Ascending aorta (tissue), 2 donors: ENCODE measurements at regions of chr10 and their contacts with region 1.

Region 1: GRCh38 chr10:102743588-102744373 is at the start of gene WBP1L:
- DNase-seq: peak; percentile 95 to 99
- H3K4me3 ChIP-seq: peak within 1 kb of the TSS; percentile 85 to 98
- H3K27ac ChIP-seq: peak within 1 kb of the TSS; percentile 97 to 99
- H3K4me1 ChIP-seq: peaks cover 8 to 25% of the 10 kb centered on the region in 2 donors
- H3K27me3 ChIP-seq: no peaks in the 10 kb centered on the region
- CTCF ChIP-seq: no peak
- total RNA-seq, gene WBP1L: 107 TPM

Region 2: DNA sequence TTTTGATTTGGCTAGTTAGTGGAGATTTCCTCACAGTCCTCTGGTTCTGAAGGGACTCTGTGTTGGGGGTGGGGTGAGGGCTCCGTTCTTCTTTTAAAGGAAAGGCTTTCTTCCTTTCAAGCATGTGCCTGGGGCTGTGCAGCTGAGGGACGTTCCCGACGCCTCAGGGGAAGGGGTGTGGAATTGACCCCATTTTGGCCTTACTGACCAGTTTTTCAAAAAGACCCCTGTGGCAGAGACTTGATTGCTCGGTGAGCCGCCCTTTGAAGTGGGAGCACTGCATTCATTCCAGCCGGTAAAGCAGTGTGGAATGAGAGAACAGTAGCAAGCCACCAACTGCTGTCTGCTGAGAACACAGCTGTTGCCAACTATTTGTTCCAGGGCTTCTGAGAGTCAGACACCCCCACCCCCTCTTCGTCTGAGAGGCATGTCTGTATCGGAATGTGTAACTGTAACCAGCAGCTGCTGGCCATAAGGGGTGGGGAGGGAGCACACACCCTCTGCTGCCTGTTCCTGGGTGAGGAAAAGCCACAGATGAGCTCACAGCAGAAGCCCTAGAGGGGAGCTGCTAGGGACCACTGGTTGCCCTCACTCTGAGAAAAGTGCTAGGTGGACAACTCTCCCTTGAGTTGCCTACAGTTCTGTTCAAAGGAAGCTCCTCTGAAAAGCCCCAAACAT is 33.1 kb after region 1 on chr10:
- intact Hi-C with region 1: loop called (anchors 2 kb)
- DNase-seq: peak; percentile 76 to 97
- H3K4me3 ChIP-seq: peak overlapping the region; percentile 42 to 63
- H3K27ac ChIP-seq: peak overlapping the region; percentile 92 to 95
- H3K4me1 ChIP-seq: peaks cover 36 to 80% of the 10 kb centered on the region in 2 donors
- H3K27me3 ChIP-seq: no peaks in the 10 kb centered on the region
- CTCF ChIP-seq: no peak